Sigmoid colon (tissue), 7 donors: ENCODE measurements at regions of chr7 and their contacts with region 1.

Region 1: DNA sequence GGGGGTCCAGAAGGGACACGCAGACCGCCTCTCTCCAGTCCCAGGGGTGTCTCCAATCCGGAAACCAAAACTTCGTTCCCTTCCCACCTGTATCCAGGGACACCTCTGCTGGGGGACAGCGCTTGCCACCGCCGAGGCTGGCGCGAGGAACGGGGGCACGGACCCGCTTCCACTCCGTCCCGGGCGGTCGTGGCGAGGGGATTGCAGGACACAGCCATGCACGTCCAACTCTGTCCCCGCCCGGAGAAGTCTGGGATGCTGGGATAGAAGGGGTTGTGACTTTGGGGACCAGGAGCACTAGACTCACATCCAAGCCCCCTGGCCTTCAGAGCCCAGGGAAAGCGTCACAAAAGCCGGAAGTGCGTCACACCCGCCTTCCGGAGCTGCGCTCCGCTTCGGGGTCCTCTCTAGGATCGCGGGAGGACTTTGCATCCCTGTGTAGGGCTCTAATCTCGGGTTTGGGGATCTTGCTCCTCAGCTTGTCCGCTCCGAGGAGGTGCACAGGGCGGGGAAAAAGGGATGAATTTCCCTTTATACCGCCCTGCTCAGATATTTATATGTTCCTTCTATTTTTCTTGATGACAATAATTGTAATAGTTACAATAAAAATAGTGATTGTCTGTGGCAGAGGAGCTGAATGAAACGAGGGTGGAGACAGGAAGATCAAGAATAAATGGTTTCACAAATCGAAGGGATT is at the start of gene FAM200A:
- DNase-seq: peak; percentile 93
- H3K4me3 ChIP-seq: peak within 1 kb of the TSS; percentile 77 to 96 (median 87)
- H3K27ac ChIP-seq: peak within 1 kb of the TSS; percentile 81 to 88 (median 84)
- H3K4me1 ChIP-seq: peaks cover 0 to 26% (median 17%) of the 10 kb centered on the region in 4 donors
- H3K27me3 ChIP-seq: no peaks in the 10 kb centered on the region
- CTCF ChIP-seq: no peak
- EP300 ChIP-seq: peak in 1 of 4 donors; percentile 52
- POLR2A ChIP-seq: peak; percentile 82 to 94
- total RNA-seq, gene FAM200A: 2.3 to 6.4 (median 4.6) TPM

Region 2: DNA sequence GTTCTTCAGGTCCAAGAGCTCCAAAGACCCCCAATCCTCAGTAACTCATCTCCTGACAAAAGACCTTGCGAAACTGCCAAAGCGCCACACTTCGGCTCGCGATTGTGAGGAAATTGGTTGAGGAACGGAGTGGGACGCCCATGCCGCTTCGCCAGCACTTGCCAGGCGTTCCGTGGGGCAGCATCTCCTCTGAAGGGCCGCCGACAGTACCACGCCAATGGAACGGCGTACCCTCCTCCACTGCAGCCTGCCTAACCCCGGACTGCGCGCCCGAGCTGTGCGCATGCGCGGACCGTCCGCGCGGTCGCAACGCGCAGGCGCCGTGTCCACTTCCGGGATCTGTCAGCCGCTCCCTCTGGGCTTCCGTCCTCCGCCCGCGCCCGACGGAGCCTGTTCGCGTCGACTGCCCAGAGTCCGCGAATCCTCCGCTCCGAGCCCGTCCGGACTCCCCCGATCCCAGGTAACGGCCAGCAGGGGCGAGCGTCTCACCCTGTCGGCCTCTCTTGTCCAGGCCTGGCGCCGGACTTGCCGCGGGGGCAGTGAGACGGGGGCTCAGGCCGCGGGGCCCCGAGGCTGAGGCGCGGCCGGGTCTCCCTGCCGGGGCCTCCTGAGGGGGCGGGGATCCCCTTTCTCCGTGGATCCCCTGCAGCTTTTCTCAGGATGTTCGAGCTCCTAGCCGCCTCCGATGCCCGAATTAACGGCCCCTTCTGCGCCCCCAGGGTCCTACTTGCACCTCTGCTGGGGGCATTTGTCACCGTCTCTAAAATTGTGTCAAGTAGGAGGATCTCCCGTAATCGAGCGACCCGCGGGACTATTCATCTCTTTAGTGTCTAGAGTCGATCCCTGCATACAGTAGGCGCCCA is 226.1 kb before region 1 on chr7 and contains the start of gene ARPC1A:
- intact Hi-C with region 1: loop called (anchors 10 kb)
- DNase-seq: peak; percentile 95
- H3K4me3 ChIP-seq: peak within 1 kb of the TSS; percentile 91 to 100 (median 96)
- H3K27ac ChIP-seq: peak within 1 kb of the TSS; percentile 88 to 91 (median 89)
- H3K4me1 ChIP-seq: peaks cover 0 to 53% (median 35%) of the 10 kb centered on the region in 4 donors
- H3K27me3 ChIP-seq: no peaks in the 10 kb centered on the region
- CTCF ChIP-seq: peak in 2 of 4 experiments; percentile 21 to 24
- EP300 ChIP-seq: peak in 1 of 4 donors; percentile 27
- POLR2A ChIP-seq: peak; percentile 45 to 76
- total RNA-seq, gene ARPC1A: 94.6 to 131 (median 111) TPM

Region 3: GRCh38 chr7:99616359-99617191 is 64.7 kb after region 1 on chr7 and contains the start of gene ZSCAN25:
- intact Hi-C with region 1: loop called (anchors 5 kb)
- DNase-seq: peak; percentile 92
- H3K4me3 ChIP-seq: peak within 1 kb of the TSS; percentile 60 to 95 (median 80)
- H3K27ac ChIP-seq: peak within 1 kb of the TSS; percentile 78 to 90 (median 88)
- H3K4me1 ChIP-seq: peaks cover 0 to 20% (median 12%) of the 10 kb centered on the region in 4 donors
- H3K27me3 ChIP-seq: no peaks in the 10 kb centered on the region
- CTCF ChIP-seq: peak in 1 of 4 experiments; percentile 11
- EP300 ChIP-seq: no peak
- POLR2A ChIP-seq: peak; percentile 40 to 51
- total RNA-seq, gene ZSCAN25: 10.7 to 19.9 (median 14.9) TPM